Heart right ventricle (tissue), 16 donors: ENCODE measurements at regions of chr5 and their contacts with region 1.

Region 1: DNA sequence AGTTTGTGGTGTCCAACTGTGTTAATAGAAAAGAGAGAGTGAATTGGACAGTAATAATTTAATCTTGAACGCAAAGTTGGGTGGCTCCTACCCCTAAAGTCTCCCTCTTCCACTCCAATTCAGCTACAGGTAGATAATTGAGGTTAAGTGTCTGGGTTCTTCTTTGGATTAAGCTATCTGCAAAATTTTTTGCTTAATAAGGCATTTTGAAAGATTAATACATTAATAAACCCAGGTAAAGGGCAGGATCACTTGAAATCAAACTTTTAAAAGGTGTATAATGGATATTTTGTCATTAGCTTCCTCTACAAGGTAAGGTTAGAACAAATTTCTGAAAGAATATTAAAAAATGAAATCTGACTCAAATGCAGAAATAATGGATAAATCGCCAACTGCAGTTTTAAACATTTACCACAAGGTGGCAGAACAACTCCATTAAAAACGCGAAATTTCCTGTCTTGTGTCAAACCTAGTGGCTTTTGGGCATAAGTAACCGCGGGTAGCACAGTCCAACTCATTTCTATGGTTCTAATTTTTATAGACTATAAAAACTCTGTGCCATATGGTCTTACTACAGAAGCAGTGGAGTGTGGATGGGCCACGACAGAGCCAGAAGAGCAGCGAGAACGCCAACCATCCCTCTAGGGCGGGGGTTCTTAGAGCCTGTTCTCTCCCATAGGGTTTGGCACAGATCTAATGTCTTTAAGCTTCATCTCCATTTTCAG is 276.5 kb downstream of the ARHGEF28 start:
- DNase-seq: peak in 1 of 2 donors; percentile 14
- ATAC-seq: peak in 5 of 8 donors; percentile 26 to 44 (median 34)
- H3K4me3 ChIP-seq: peak overlapping the region in 3 of 10 donors; percentile 4 to 25 (median 8)
- H3K27ac ChIP-seq: peak overlapping the region in 2 of 10 donors; percentile 56 to 59
- H3K4me1 ChIP-seq: peaks cover 0 to 54% (median 15%) of the 10 kb centered on the region in 9 donors
- H3K27me3 ChIP-seq: no peaks in the 10 kb centered on the region
- CTCF ChIP-seq: peak; percentile 69 to 93 (median 85)

Region 2: GRCh38 chr5:73792687-73793320 is 109.7 kb before region 1 on chr5:
- intact Hi-C with region 1: loop called in 1 of 10 experiments (anchors 5 kb)
- DNase-seq: peak; percentile 56 to 73
- ATAC-seq: peak; percentile 57 to 88 (median 80)
- H3K4me3 ChIP-seq: no peak overlapping the region
- H3K27ac ChIP-seq: no peak overlapping the region
- H3K4me1 ChIP-seq: peaks cover 0 to 36% (median 11%) of the 10 kb centered on the region in 9 donors
- H3K27me3 ChIP-seq: peaks cover 0 to 5% (median 0%) of the 10 kb centered on the region in 7 donors
- CTCF ChIP-seq: peak; percentile 90 to 99 (median 96)

Region 3: DNA sequence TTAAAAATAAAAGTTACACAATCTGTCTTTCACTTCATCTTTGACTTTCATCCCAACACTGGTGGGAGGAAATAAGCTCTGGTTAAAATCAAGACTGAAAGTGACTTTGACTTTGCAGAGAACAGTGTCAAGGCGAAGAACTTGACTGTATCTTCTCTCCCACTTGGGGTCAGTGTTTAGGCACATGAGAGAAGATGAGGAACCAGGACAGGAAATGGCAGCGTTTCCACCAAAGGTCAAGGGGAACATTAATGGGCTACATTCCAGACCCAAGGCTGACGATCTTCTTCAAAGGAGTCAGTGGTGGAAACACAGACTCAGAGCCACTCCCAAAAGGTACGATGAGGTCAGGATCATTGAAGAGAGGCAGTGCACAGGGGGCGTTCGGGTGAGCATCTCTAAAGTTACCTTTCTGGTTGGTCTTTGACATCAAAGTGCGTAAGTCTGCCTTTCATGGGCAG is 133.1 kb after region 1 on chr5:
- intact Hi-C with region 1: loop called in 2 of 10 experiments (anchors 5 to 10 kb)
- DNase-seq: peak in 1 of 2 donors; percentile 63
- ATAC-seq: peak; percentile 47 to 90 (median 80)
- H3K4me3 ChIP-seq: no peak overlapping the region
- H3K27ac ChIP-seq: no peak overlapping the region
- H3K4me1 ChIP-seq: peaks cover 0 to 11% (median 5%) of the 10 kb centered on the region in 9 donors
- H3K27me3 ChIP-seq: no peaks in the 10 kb centered on the region
- CTCF ChIP-seq: peak; percentile 16 to 72 (median 52)

Region 4: DNA sequence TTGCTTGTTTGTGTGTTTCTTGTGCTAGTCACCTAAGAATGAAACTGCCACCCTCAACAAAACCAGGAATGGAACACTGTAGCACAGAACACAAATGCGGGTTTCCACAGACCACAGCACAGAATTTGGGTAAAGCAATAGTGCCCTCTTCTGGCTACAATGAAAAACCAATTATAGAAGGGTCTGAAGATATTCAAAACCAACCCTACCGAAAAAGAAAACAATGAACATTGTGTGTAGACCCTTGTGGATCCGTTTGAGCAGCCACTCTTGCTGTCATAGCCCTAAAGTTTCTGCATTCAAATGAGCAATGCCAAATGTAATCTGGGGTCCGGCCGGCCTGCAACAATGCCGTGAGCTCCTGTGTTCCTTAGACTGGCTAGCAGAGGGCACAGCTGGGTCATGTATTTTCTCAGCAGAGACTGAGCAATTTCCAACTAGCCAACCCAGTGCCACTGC is 746.4 kb after region 1 on chr5:
- intact Hi-C with region 1: loop called in 8 of 10 experiments (anchors 1 to 5 kb)
- DNase-seq: no peak
- ATAC-seq: peak; percentile 75 to 93 (median 90)
- H3K4me3 ChIP-seq: peak overlapping the region in 1 of 10 donors; percentile 25
- H3K27ac ChIP-seq: no peak overlapping the region
- H3K4me1 ChIP-seq: peaks cover 0 to 17% (median 7%) of the 10 kb centered on the region in 9 donors
- H3K27me3 ChIP-seq: no peaks in the 10 kb centered on the region
- CTCF ChIP-seq: peak; percentile 54 to 88 (median 77)

Region 5: GRCh38 chr5:74919487-74919886 is 1017.0 kb after region 1 on chr5:
- intact Hi-C with region 1: loop called in 3 of 10 experiments (anchors 10 kb)
- DNase-seq: no peak
- ATAC-seq: peak in 2 of 8 donors; percentile 46 to 61
- H3K4me3 ChIP-seq: no peak overlapping the region
- H3K27ac ChIP-seq: no peak overlapping the region
- H3K4me1 ChIP-seq: no peaks in the 10 kb centered on the region
- H3K27me3 ChIP-seq: peaks cover 0 to 3% (median 0%) of the 10 kb centered on the region in 7 donors
- CTCF ChIP-seq: peak; percentile 16 to 61 (median 52)